Activated T-helper 1 cell treated with anti-CD3 and anti-CD28 coated beads, Interleukin-12 subunit alpha, Interleukin-12 subunit beta, Interleukin-2, Interleukin-4 antibody, amounts not matched to agents 30 ng/mL and 10 ng/mL and 1 ng/mL, durations not matched to agents 14 hours and 24 hours and 36 hours (primary cell): ENCODE measurements at regions of chr2 and their contacts with region 1.

Region 1: GRCh38 chr2:112054847-112055729 is at the start of gene TMEM87B:
- DNase-seq: peak; percentile 95
- H3K4me3 Mint-ChIP-seq: peak within 1 kb of the TSS; percentile 93
- H3K27ac Mint-ChIP-seq: peak within 1 kb of the TSS; percentile 98
- H3K4me1 Mint-ChIP-seq: peaks cover 43% of the 10 kb centered on the region
- H3K27me3 Mint-ChIP-seq: peaks cover 2% of the 10 kb centered on the region
- total RNA-seq, gene TMEM87B: 15.0 and 16.6 TPM in 2 replicates

Region 2: DNA sequence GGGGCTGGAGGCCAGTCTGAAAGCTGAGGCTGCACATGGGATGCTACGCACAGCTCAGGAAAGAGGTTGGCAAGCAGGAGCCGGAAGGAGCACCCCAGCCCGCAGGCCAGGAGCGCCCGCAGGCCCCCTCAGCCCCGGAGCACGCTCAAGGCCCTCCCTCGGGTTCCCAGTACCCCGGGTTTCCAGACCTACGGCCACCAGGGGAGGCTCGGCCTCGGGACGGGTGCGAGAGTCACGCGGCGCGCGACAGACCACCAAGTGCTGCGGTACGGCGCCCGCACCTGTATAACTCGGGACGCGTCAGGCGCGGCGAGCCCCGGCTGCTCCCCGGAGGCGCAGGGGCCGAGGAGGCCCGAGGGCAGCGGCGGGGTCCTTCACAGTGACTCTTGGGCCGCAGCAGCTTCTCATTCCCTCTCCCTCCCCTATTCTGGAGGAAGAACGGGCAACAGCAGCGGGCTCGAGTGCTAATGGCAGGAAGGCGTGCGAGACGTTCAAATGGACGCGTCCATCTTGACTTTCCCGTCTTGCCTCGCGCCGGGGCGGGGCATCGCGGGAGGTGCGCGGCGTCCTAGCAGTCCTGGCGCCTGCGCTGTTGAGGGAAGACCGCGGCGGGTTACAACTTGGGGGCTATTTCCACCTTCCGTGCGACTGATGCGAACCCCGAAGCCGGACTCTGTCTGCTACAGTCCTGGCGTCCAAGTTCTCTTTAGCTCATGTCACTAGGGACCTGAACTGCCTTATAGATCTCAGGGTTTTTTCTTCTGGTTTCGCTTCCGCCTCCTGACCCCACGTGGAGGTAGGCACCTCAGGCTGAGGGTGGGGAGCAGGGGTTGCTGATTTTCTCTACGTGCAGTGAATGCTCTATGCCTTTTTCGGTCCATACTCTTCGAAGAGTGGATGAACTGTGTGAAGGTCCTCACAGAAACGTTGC is 171.2 kb before region 1 on chr2 and contains the start of gene ANAPC1:
- intact Hi-C with region 1: loop called (anchors 1 kb)
- DNase-seq: peak; percentile 84
- H3K4me3 Mint-ChIP-seq: peak within 1 kb of the TSS; percentile 95
- H3K27ac Mint-ChIP-seq: peak within 1 kb of the TSS; percentile 93
- H3K4me1 Mint-ChIP-seq: no peaks in the 10 kb centered on the region
- H3K27me3 Mint-ChIP-seq: peaks cover 4% of the 10 kb centered on the region
- total RNA-seq, gene ANAPC1: 120 and 126 TPM in 2 replicates

Region 3: DNA sequence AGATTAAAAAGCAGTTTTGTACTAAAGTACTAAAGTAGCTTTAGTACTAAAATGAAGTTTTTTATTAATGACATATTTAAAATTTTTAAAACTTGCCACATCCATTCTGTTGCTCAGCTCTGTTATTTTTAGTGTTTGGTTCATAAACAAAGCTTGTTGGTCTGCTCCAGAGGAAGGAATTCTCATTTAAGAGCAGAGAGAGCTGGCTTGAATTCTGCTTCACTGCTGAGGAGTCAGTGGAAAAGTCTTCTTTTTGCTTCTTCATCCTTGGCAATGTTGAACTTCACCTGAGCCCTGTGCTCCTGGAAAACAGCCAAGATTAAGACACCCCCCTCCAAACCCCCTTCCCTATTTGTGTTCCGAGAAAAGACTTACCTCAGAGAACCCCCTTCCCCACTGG is 40.6 kb after region 1 on chr2:
- intact Hi-C with region 1: loop called (anchors 1 kb)
- DNase-seq: no peak
- H3K4me3 Mint-ChIP-seq: no peak overlapping the region
- H3K27ac Mint-ChIP-seq: no peak overlapping the region
- H3K4me1 Mint-ChIP-seq: peaks cover 18% of the 10 kb centered on the region
- H3K27me3 Mint-ChIP-seq: no peaks in the 10 kb centered on the region

Region 4: GRCh38 chr2:112275306-112275886 is 220.3 kb after region 1 on chr2 and contains the start of gene ZC3H6:
- intact Hi-C with region 1: loop called (anchors 1 kb)
- DNase-seq: peak; percentile 99
- H3K4me3 Mint-ChIP-seq: peak within 1 kb of the TSS; percentile 91
- H3K27ac Mint-ChIP-seq: peak within 1 kb of the TSS; percentile 97
- H3K4me1 Mint-ChIP-seq: peaks cover 13% of the 10 kb centered on the region
- H3K27me3 Mint-ChIP-seq: peaks cover 2% of the 10 kb centered on the region
- total RNA-seq, gene ZC3H6: 3.3 and 4.3 TPM in 2 replicates

Region 5: DNA sequence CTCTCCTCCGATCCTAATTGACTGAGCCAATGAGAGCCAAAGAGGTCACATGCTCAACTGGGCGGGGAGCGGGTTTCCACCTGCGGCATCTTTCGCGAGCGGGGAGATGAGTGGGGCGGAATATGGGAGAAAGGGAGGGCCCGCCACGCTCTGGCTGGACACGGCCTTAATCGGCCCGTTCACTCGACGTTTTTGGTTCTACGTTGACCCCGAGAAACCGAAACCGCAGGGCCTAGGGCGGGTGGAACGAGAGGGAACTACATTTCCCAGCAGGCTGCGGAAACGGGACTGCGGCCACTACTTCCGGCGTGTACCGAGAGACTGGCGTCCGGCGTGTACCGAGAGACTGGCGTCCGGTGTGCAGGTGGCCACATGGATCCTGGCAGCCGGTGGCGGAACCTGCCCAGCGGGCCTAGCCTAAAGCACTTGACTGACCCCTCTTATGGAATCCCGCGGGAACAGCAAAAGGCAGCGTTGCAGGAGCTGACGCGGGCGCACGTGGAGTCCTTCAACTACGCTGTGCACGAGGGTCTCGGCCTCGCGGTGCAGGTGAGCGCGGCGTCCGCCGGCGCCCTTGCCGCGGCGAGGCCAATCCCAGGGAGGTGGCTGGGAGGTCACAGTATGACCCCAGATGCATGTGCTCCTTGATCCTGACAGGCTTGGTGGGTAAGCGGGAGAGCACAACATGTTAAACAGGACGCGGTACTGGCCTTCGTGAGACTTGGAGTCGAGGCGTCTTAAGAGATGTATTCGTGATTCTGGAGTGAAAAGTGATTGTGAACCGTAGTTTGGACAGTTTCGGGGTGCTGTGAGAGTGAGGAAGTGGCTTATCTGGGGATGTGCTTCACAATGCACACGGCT is 487.3 kb after region 1 on chr2 and contains the start of gene POLR1B:
- intact Hi-C with region 1: loop called (anchors 2 kb)
- DNase-seq: peak; percentile 77
- H3K4me3 Mint-ChIP-seq: no peak within 1 kb of the TSS
- H3K27ac Mint-ChIP-seq: no peak within 1 kb of the TSS
- H3K4me1 Mint-ChIP-seq: peaks cover 11% of the 10 kb centered on the region
- H3K27me3 Mint-ChIP-seq: no peaks in the 10 kb centered on the region
- total RNA-seq, gene POLR1B: 75.6 and 78.4 TPM in 2 replicates